PC-9 (cell line): ENCODE measurements at regions of chr13 and their contacts with region 1.

Region 1: GRCh38 chr13:109786457-109787134 is at the start of gene IRS2:
- DNase-seq: peak; percentile 92 to 95
- H3K4me3 ChIP-seq: peak within 1 kb of the TSS; percentile 100
- H3K27ac ChIP-seq: peak within 1 kb of the TSS; percentile 83
- H3K4me1 ChIP-seq: peaks cover 40% of the 10 kb centered on the region
- H3K27me3 ChIP-seq: no peaks in the 10 kb centered on the region
- CTCF ChIP-seq: no peak
- total RNA-seq, gene IRS2: 31.3 and 39.2 TPM in 2 replicates

Region 2: GRCh38 chr13:108915634-108916512 is 870.7 kb before region 1 on chr13:
- CTCF ChIA-PET with region 1: interaction called, 3 read pairs
- POLR2A ChIA-PET with region 1: no interaction called
- intact Hi-C with region 1: loop called (anchors 2 kb)
- DNase-seq: peak; percentile 81 to 96
- H3K4me3 ChIP-seq: peak overlapping the region; percentile 47
- H3K27ac ChIP-seq: peak overlapping the region; percentile 96
- H3K4me1 ChIP-seq: peaks cover 56% of the 10 kb centered on the region
- H3K27me3 ChIP-seq: no peaks in the 10 kb centered on the region
- CTCF ChIP-seq: no peak

Region 3: GRCh38 chr13:109862627-109863026 is 76.0 kb after region 1 on chr13:
- CTCF ChIA-PET with region 1: no interaction called
- POLR2A ChIA-PET with region 1: interaction called, 13 read pairs
- intact Hi-C with region 1: no loop called
- DNase-seq: peak in 1 of 2 experiments; percentile 98
- H3K4me3 ChIP-seq: peak overlapping the region; percentile 23; the same call in 1 of the 2 replicates
- H3K27ac ChIP-seq: peak overlapping the region; percentile 81
- H3K4me1 ChIP-seq: peaks cover 79% of the 10 kb centered on the region
- H3K27me3 ChIP-seq: no peaks in the 10 kb centered on the region
- CTCF ChIP-seq: no peak

Region 4: GRCh38 chr13:109874484-109875454 is 88.2 kb after region 1 on chr13:
- CTCF ChIA-PET with region 1: no interaction called
- POLR2A ChIA-PET with region 1: no interaction called
- intact Hi-C with region 1: loop called (anchors 1 kb)
- DNase-seq: peak; percentile 32 to 90
- H3K4me3 ChIP-seq: peak overlapping the region; percentile 4; the same call in 1 of the 2 replicates
- H3K27ac ChIP-seq: peak overlapping the region; percentile 84
- H3K4me1 ChIP-seq: peaks cover 76% of the 10 kb centered on the region
- H3K27me3 ChIP-seq: no peaks in the 10 kb centered on the region
- CTCF ChIP-seq: no peak

Region 5: GRCh38 chr13:110012102-110012739 is 225.6 kb after region 1 on chr13:
- CTCF ChIA-PET with region 1: interaction called, 7 read pairs
- POLR2A ChIA-PET with region 1: no interaction called
- intact Hi-C with region 1: loop called (anchors 1 kb)
- DNase-seq: peak; percentile 77 to 99
- H3K4me3 ChIP-seq: 0 out of 2 replicates have a peak overlapping the region, but pooled peaks have one; percentile 4
- H3K27ac ChIP-seq: peak overlapping the region; percentile 91
- H3K4me1 ChIP-seq: peaks cover 49% of the 10 kb centered on the region
- H3K27me3 ChIP-seq: no peaks in the 10 kb centered on the region
- CTCF ChIP-seq: no peak

Region 6: GRCh38 chr13:110108347-110109174 is 322.0 kb after region 1 on chr13:
- CTCF ChIA-PET with region 1: interaction called, 3 read pairs
- POLR2A ChIA-PET with region 1: no interaction called
- intact Hi-C with region 1: loop called (anchors 1 kb)
- DNase-seq: peak; percentile 86 to 88
- H3K4me3 ChIP-seq: no peak overlapping the region
- H3K27ac ChIP-seq: peak overlapping the region; percentile 8; the same call in 1 of the 2 replicates
- H3K4me1 ChIP-seq: peaks cover 24% of the 10 kb centered on the region
- H3K27me3 ChIP-seq: no peaks in the 10 kb centered on the region
- CTCF ChIP-seq: peak; percentile 95

Region 7: DNA sequence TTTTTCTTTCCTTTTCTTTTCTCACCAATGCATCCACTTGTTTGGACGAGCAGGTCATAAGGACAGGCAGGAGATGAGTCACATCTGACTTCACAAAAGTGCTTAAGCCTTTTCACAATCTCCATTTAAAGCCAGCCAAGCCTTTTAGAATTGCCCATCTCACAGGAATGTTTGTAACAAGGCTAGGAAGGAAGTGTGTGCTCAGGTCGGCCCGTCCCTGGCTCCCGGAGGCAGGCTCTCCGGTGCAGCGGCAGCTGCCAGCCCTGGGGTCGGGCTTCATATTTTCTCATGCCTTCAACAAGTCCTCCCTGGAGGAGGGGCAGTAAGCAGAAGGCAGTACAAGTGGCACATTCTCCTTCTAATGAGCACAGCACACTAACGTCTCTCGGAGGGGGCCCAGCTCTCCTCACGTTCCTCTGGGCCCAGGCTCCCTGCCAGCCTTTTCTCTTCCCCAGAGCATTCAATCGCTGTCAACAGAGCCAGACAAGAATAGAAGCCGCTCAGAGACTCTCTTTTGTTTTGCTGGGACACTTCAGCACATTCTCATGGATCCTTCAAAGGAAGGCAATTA is 339.9 kb after region 1 on chr13:
- CTCF ChIA-PET with region 1: no interaction called
- POLR2A ChIA-PET with region 1: no interaction called
- intact Hi-C with region 1: no loop called
- DNase-seq: peak; percentile 81 to 99
- H3K4me3 ChIP-seq: peak overlapping the region; percentile 33; the same call in 1 of the 2 replicates
- H3K27ac ChIP-seq: peak overlapping the region; percentile 94
- H3K4me1 ChIP-seq: peaks cover 42% of the 10 kb centered on the region
- H3K27me3 ChIP-seq: no peaks in the 10 kb centered on the region
- CTCF ChIP-seq: no peak